CD8-positive, alpha-beta T cell (primary cell): ENCODE measurements at regions of chr16 and their contacts with region 1.

Region 1: GRCh38 chr16:70653809-70654771 is 7.7 kb downstream of the IL34 start:
- DNase-seq: peak; percentile 65 to 89 (median 79)
- ATAC-seq: peak; percentile 90
- H3K4me3 ChIP-seq: no peak overlapping the region
- H3K4me3 Mint-ChIP-seq: peak overlapping the region; percentile 13
- H3K27ac ChIP-seq: no peak overlapping the region
- H3K27ac Mint-ChIP-seq: no peak overlapping the region
- H3K4me1 ChIP-seq: no peaks in the 10 kb centered on the region
- H3K4me1 Mint-ChIP-seq: peaks cover 4% of the 10 kb centered on the region
- H3K27me3 ChIP-seq: no peaks in the 10 kb centered on the region
- H3K27me3 Mint-ChIP-seq: peaks cover 2% of the 10 kb centered on the region
- CTCF ChIP-seq: peak; percentile 80

Region 2: GRCh38 chr16:69396187-69397061 is 1257.7 kb before region 1 on chr16:
- CTCF ChIA-PET with region 1: no interaction called
- POLR2A ChIA-PET with region 1: no interaction called
- intact Hi-C with region 1: loop called in 1 of 2 experiments (anchors 5 kb)
- DNase-seq: peak; percentile 27 to 87 (median 74)
- ATAC-seq: peak; percentile 85
- H3K4me3 ChIP-seq: no peak overlapping the region
- H3K4me3 Mint-ChIP-seq: no peak overlapping the region
- H3K27ac ChIP-seq: peak overlapping the region in 1 of 2 experiments; percentile 58
- H3K27ac Mint-ChIP-seq: peak overlapping the region; percentile 0
- H3K4me1 ChIP-seq: peaks cover 4% of the 10 kb centered on the region
- H3K4me1 Mint-ChIP-seq: peaks cover 6% of the 10 kb centered on the region
- H3K27me3 ChIP-seq: no peaks in the 10 kb centered on the region
- H3K27me3 Mint-ChIP-seq: no peaks in the 10 kb centered on the region
- CTCF ChIP-seq: peak; percentile 80

Region 3: GRCh38 chr16:69796351-69797118 is 857.6 kb before region 1 on chr16:
- CTCF ChIA-PET with region 1: no interaction called
- POLR2A ChIA-PET with region 1: no interaction called
- intact Hi-C with region 1: loop called in 1 of 2 experiments (anchors 1 kb)
- DNase-seq: peak in 4 of 9 experiments; percentile 16 to 64 (median 37)
- ATAC-seq: peak; percentile 66
- H3K4me3 ChIP-seq: no peak overlapping the region
- H3K4me3 Mint-ChIP-seq: no peak overlapping the region
- H3K27ac ChIP-seq: no peak overlapping the region
- H3K27ac Mint-ChIP-seq: no peak overlapping the region
- H3K4me1 ChIP-seq: no peaks in the 10 kb centered on the region
- H3K4me1 Mint-ChIP-seq: peaks cover 3% of the 10 kb centered on the region
- H3K27me3 ChIP-seq: no peaks in the 10 kb centered on the region
- H3K27me3 Mint-ChIP-seq: no peaks in the 10 kb centered on the region
- CTCF ChIP-seq: peak; percentile 85

Region 4: GRCh38 chr16:70331588-70332358 is 322.3 kb before region 1 on chr16:
- CTCF ChIA-PET with region 1: interaction called, 8 read pairs
- POLR2A ChIA-PET with region 1: no interaction called
- intact Hi-C with region 1: loop called in 1 of 2 experiments (anchors 1 kb)
- DNase-seq: peak in 3 of 9 experiments; percentile 1 to 15 (median 12)
- ATAC-seq: peak; percentile 51
- H3K4me3 ChIP-seq: no peak overlapping the region
- H3K4me3 Mint-ChIP-seq: no peak overlapping the region
- H3K27ac ChIP-seq: no peak overlapping the region
- H3K27ac Mint-ChIP-seq: no peak overlapping the region
- H3K4me1 ChIP-seq: no peaks in the 10 kb centered on the region
- H3K4me1 Mint-ChIP-seq: no peaks in the 10 kb centered on the region
- H3K27me3 ChIP-seq: no peaks in the 10 kb centered on the region
- H3K27me3 Mint-ChIP-seq: no peaks in the 10 kb centered on the region
- CTCF ChIP-seq: peak; percentile 19

Region 5: DNA sequence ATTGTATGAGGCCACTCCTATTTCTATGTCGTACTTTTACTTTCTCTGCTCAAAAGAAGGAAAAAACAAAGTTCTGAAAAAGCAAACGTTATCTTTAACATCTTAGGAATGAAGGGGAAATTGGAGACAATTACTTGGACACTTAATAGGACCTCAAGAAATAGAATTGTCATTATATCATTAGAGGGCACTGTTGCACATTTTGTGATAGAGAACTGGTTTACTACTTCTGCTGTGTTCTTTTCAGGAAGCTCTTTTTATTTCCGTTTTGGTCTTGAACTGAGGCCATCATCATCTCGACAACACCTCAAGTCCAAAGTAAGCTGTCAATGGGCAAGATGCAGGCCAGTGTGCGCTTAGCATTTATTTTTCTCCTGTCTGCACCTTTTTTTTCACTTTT is 145.3 kb before region 1 on chr16:
- CTCF ChIA-PET with region 1: interaction called, 7 read pairs
- POLR2A ChIA-PET with region 1: no interaction called
- intact Hi-C with region 1: loop called in 1 of 2 experiments (anchors 10 kb)
- DNase-seq: peak in 2 of 9 experiments; percentile 42 to 58
- ATAC-seq: peak; percentile 61
- H3K4me3 ChIP-seq: no peak overlapping the region
- H3K4me3 Mint-ChIP-seq: peak overlapping the region; percentile 4
- H3K27ac ChIP-seq: peak overlapping the region; percentile 1 to 41
- H3K27ac Mint-ChIP-seq: peak overlapping the region; percentile 88
- H3K4me1 ChIP-seq: peaks cover 4% of the 10 kb centered on the region
- H3K4me1 Mint-ChIP-seq: peaks cover 9% of the 10 kb centered on the region
- H3K27me3 ChIP-seq: no peaks in the 10 kb centered on the region
- H3K27me3 Mint-ChIP-seq: no peaks in the 10 kb centered on the region
- CTCF ChIP-seq: no peak

Region 6: GRCh38 chr16:70679666-70680494 is 25.8 kb after region 1 on chr16:
- CTCF ChIA-PET with region 1: interaction called, 13 read pairs
- POLR2A ChIA-PET with region 1: no interaction called
- intact Hi-C with region 1: no loop called
- DNase-seq: peak in 4 of 9 experiments; percentile 12 to 33 (median 24)
- ATAC-seq: peak; percentile 55
- H3K4me3 ChIP-seq: no peak overlapping the region
- H3K4me3 Mint-ChIP-seq: no peak overlapping the region
- H3K27ac ChIP-seq: no peak overlapping the region
- H3K27ac Mint-ChIP-seq: no peak overlapping the region
- H3K4me1 ChIP-seq: peaks cover 12% of the 10 kb centered on the region
- H3K4me1 Mint-ChIP-seq: peaks cover 12% of the 10 kb centered on the region
- H3K27me3 ChIP-seq: no peaks in the 10 kb centered on the region
- H3K27me3 Mint-ChIP-seq: no peaks in the 10 kb centered on the region
- CTCF ChIP-seq: peak; percentile 24

Region 7: DNA sequence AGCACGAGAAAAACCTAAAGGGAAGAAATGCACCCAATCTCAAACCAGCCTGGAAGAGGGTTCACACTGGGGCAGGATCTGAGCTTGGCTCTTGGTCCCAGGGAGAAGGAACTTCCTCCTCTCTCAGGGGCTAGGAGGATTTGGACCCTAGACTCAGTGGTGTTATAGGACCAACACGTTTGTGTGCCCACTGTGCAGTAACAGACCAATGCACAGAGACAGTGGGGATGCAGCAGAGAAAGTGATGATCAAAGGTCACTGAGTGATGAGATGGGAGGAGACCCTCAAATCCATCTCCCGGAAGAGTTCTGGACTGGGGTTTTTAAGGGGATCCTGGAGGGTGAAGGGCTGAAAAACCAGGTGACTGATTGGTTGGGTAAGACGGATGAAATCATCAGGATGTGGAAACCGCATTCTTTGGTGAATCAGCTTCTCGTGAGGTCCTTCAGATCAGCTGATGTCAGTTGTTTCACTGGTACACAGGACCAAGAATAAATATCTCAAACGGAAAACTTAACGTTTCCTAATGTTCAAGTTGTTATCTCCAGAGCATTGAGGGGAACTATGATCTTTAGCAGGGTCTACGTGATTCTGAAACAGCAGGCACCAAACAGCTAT is 150.1 kb after region 1 on chr16:
- CTCF ChIA-PET with region 1: no interaction called
- POLR2A ChIA-PET with region 1: no interaction called
- intact Hi-C with region 1: no loop called
- DNase-seq: peak in 1 of 9 experiments; percentile 13
- ATAC-seq: no peak
- H3K4me3 ChIP-seq: no peak overlapping the region
- H3K4me3 Mint-ChIP-seq: no peak overlapping the region
- H3K27ac ChIP-seq: no peak overlapping the region
- H3K27ac Mint-ChIP-seq: no peak overlapping the region
- H3K4me1 ChIP-seq: peaks cover 12% of the 10 kb centered on the region
- H3K4me1 Mint-ChIP-seq: peaks cover 19% of the 10 kb centered on the region
- H3K27me3 ChIP-seq: no peaks in the 10 kb centered on the region
- H3K27me3 Mint-ChIP-seq: peaks cover 10% of the 10 kb centered on the region
- CTCF ChIP-seq: no peak